Naive thymus-derived CD4-positive, alpha-beta T cell (primary cell): ENCODE measurements at regions of chr6 and their contacts with region 1.

Region 1: DNA sequence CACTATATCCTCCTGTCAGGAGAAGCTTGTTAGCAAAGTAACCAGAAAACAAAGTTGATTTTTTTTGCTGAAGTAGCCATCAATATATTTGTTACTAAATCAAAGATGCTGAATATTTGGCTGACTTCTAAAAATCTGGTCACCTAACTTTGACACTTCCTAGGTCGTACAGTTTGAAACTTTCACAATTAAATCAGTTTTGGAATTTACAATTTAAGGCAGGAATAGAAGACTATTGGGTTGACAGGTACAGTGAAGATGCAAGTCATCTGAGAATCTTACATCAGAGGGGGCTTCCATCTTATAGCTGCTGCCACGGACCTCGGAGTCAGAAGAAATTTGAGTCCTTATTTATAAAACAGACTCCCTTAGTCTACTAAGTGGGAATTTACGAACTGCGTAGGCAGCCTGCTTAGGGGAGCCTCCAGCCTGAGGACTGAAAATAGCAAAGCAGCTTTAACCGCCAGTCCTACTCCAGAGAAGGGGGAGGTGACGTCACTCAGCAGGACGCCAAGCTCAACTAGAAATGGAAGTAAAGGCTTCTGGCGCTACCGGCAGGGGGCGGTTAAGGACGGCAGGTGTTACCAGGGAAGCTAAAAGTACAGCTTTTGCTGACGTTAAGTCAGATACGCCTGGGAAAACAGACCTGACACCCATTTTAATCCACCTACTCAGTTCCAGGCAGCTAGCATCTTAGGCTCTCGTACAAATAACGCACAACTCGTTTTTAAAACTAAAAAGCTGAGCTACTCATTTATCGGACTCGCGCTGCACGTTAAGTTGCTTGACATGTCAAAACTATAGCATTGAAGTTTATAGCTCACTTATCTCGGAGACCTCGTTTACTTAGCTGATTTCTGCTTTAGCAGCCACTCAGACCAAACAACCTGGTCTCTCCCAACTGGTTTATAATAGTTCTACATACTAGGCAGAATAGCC is 61.1 kb upstream of the HFE start:
- DNase-seq: peak; percentile 82 to 98 (median 95)
- ATAC-seq: peak; percentile 60
- H3K4me3 ChIP-seq: peak overlapping the region; percentile 75
- H3K4me3 Mint-ChIP-seq: peak overlapping the region; percentile 81 to 99 (median 94)
- H3K27ac ChIP-seq: peak overlapping the region; percentile 94
- H3K27ac Mint-ChIP-seq: peak overlapping the region; percentile 93 to 100 (median 98)
- H3K4me1 ChIP-seq: peaks cover 11 to 22% of the 10 kb centered on the region in 2 donors
- H3K4me1 Mint-ChIP-seq: peaks cover 12 to 81% (median 50%) of the 10 kb centered on the region in 7 donors
- H3K27me3 ChIP-seq: no peaks in the 10 kb centered on the region
- H3K27me3 Mint-ChIP-seq: peaks cover 0 to 9% (median 0%) of the 10 kb centered on the region in 5 donors

Region 2: DNA sequence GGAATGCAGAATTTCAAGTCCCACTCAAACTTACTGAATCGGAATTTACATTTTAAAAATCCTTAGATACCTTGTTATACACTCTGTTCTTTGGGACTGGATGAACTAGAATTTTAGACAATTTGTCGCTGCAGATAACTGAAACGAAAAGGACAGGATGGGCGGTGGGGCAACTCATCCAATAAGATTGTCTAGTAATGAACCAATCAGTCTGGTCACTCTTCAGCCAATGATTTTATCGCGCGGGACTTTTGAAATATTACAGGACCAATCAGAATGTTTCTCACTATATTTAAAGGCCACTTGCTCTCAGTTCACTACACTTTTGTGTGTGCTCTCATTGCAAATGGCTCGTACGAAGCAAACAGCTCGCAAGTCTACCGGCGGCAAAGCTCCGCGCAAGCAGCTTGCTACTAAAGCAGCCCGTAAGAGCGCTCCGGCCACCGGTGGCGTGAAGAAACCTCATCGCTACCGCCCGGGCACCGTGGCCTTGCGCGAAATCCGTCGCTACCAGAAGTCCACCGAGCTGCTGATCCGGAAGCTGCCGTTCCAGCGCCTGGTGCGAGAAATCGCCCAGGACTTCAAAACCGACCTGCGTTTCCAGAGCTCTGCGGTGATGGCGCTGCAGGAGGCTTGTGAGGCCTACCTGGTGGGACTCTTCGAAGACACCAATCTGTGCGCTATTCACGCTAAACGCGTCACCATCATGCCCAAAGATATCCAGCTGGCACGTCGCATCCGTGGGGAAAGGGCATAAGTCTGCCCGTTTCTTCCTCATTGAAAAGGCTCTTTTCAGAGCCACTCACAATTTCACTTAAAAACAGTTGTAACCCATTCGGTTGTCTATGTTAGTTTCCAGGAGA is 19.1 kb after region 1 on chr6:
- CTCF ChIA-PET with region 1: interaction called, 69 read pairs
- POLR2A ChIA-PET with region 1: interaction called, 2,497 read pairs
- intact Hi-C with region 1: loop called (anchors 1 kb)
- DNase-seq: peak; percentile 39 to 93 (median 89)
- ATAC-seq: peak; percentile 68
- H3K4me3 ChIP-seq: peak overlapping the region; percentile 91
- H3K4me3 Mint-ChIP-seq: peak overlapping the region; percentile 87 to 98 (median 94)
- H3K27ac ChIP-seq: peak overlapping the region; percentile 90
- H3K27ac Mint-ChIP-seq: peak overlapping the region; percentile 80 to 98 (median 95)
- H3K4me1 ChIP-seq: peaks cover 7 to 19% of the 10 kb centered on the region in 2 donors
- H3K4me1 Mint-ChIP-seq: peaks cover 8 to 51% (median 20%) of the 10 kb centered on the region in 7 donors
- H3K27me3 ChIP-seq: no peaks in the 10 kb centered on the region
- H3K27me3 Mint-ChIP-seq: peaks cover 0 to 3% (median 0%) of the 10 kb centered on the region in 5 donors

Region 3: DNA sequence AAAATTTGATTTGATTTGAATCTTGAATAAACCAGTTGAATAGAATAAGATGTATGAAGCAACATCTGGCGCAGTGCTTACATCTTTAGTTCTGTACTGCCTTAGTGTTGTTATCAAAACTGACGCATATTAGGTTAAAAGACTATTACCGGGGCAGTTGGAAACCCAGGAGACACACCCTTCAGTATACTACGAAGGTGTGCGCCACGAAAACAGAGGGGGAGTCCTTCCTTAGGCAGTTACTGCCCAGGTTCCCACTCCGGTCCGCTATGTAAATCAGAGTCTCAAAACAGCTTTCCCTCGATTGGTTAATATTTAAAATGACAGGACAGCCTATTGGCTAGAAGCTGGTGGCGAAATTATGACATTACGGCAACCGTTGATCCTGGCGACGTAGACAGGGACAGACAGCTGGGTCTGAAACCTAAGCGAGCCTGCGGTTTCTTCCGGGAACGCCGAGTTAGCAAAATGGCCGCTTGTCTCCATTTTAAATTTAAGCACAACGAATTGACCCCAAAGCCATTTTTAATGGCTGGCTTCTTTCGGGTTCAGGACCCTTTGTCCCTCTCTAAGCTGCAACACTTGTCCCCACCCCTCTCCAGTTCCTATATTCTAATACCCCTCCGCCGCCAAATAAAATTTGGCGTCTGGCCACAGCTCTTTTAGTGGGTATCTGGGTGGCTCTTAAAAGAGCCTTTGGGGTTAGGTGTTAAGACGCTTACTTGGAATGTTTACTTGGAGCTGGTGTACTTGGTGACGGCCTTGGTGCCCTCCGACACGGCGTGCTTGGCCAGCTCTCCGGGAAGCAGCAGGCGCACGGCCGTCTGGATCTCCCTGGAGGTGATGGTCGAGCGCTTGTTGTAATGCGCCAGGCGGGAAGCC is 96.9 kb after region 1 on chr6:
- CTCF ChIA-PET with region 1: interaction called, 3 read pairs
- POLR2A ChIA-PET with region 1: interaction called, 413 read pairs
- intact Hi-C with region 1: loop called in 1 of 2 experiments (anchors 1 kb)
- DNase-seq: peak; percentile 68 to 99 (median 96)
- ATAC-seq: peak; percentile 78
- H3K4me3 ChIP-seq: peak overlapping the region; percentile 94
- H3K4me3 Mint-ChIP-seq: peak overlapping the region; percentile 92 to 100 (median 98)
- H3K27ac ChIP-seq: peak overlapping the region; percentile 86
- H3K27ac Mint-ChIP-seq: peak overlapping the region; percentile 97 to 100 (median 99)
- H3K4me1 ChIP-seq: peaks cover 18 to 23% of the 10 kb centered on the region in 2 donors
- H3K4me1 Mint-ChIP-seq: peaks cover 22 to 54% (median 30%) of the 10 kb centered on the region in 7 donors
- H3K27me3 ChIP-seq: no peaks in the 10 kb centered on the region
- H3K27me3 Mint-ChIP-seq: peaks cover 0 to 21% (median 0%) of the 10 kb centered on the region in 5 donors

Region 4: GRCh38 chr6:26223650-26224546 is 197.7 kb after region 1 on chr6:
- CTCF ChIA-PET with region 1: no interaction called
- POLR2A ChIA-PET with region 1: interaction called, 11 read pairs
- intact Hi-C with region 1: no loop called
- DNase-seq: peak in 7 of 9 donors; percentile 79 to 89 (median 84)
- ATAC-seq: peak; percentile 93
- H3K4me3 ChIP-seq: peak overlapping the region; percentile 77
- H3K4me3 Mint-ChIP-seq: no peak overlapping the region
- H3K27ac ChIP-seq: peak overlapping the region; percentile 77
- H3K27ac Mint-ChIP-seq: no peak overlapping the region
- H3K4me1 ChIP-seq: peaks cover 14 to 18% of the 10 kb centered on the region in 2 donors
- H3K4me1 Mint-ChIP-seq: peaks cover 10 to 25% (median 18%) of the 10 kb centered on the region in 7 donors
- H3K27me3 ChIP-seq: no peaks in the 10 kb centered on the region
- H3K27me3 Mint-ChIP-seq: no peaks in the 10 kb centered on the region

Region 5: DNA sequence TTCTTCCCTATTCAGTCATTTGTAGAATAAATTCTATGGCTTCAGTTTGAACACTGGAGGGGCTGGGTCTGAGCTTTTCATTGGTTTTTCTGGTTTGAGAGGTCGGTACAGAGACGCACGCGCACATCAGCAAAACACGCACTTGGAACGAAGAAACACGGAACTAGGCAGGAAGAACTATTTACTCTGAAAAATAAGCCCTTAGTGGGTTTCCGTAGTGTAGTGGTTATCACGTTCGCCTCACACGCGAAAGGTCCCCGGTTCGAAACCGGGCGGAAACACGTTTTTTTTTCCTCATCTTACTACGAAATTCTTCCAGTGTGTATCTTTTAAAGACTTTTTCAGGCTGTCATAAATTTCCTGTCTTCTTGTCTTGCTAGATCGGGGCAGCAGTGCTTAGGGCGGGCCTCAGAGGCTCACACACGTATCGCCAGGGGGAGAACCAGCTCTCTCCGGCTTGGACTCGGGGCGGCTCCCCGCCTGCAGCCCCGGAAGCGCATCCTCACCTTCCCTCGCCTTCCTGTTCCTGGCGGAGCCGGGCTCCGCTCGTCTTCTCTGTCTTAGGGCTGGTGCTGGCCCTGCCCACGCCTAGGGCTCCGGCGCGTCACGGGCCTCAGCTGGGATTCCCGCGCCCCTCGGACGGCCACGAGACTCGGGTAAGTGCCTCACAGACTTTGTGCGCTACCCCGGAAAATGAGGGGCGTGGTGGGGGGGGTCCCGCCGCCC is 511.8 kb after region 1 on chr6 and contains the start of gene HMGN4:
- CTCF ChIA-PET with region 1: no interaction called
- POLR2A ChIA-PET with region 1: interaction called, 6 read pairs
- intact Hi-C with region 1: loop called in 1 of 2 experiments (anchors 10 kb)
- DNase-seq: peak; percentile 64 to 97 (median 95)
- ATAC-seq: peak; percentile 79
- H3K4me3 ChIP-seq: peak within 1 kb of the TSS; percentile 76
- H3K4me3 Mint-ChIP-seq: peak within 1 kb of the TSS; percentile 88 to 99 (median 94)
- H3K27ac ChIP-seq: peak within 1 kb of the TSS; percentile 88
- H3K27ac Mint-ChIP-seq: peak within 1 kb of the TSS; percentile 91 to 99 (median 98)
- H3K4me1 ChIP-seq: peaks cover 20 to 23% of the 10 kb centered on the region in 2 donors
- H3K4me1 Mint-ChIP-seq: peaks cover 46 to 72% (median 60%) of the 10 kb centered on the region in 7 donors
- H3K27me3 ChIP-seq: no peaks in the 10 kb centered on the region
- H3K27me3 Mint-ChIP-seq: peaks cover 0 to 5% (median 0%) of the 10 kb centered on the region in 5 donors
- total RNA-seq, gene HMGN4: 37.6 to 96.0 (median 81.7) TPM

Region 6: GRCh38 chr6:27825025-27825793 is 1799.0 kb after region 1 on chr6:
- CTCF ChIA-PET with region 1: no interaction called
- POLR2A ChIA-PET with region 1: interaction called, 15 read pairs
- intact Hi-C with region 1: no loop called
- DNase-seq: no peak
- ATAC-seq: no peak
- H3K4me3 ChIP-seq: peak overlapping the region; percentile 87
- H3K4me3 Mint-ChIP-seq: peak overlapping the region; percentile 82 to 99 (median 94)
- H3K27ac ChIP-seq: peak overlapping the region; percentile 89
- H3K27ac Mint-ChIP-seq: peak overlapping the region; percentile 90 to 100 (median 98)
- H3K4me1 ChIP-seq: peaks cover 6% of the 10 kb centered on the region in 2 donors
- H3K4me1 Mint-ChIP-seq: peaks cover 11 to 50% (median 33%) of the 10 kb centered on the region in 7 donors
- H3K27me3 ChIP-seq: no peaks in the 10 kb centered on the region
- H3K27me3 Mint-ChIP-seq: peaks cover 0 to 4% (median 0%) of the 10 kb centered on the region in 5 donors